ENCODE measurements at regions of chr10 and their contacts with region 1.

Region 1: GRCh38 chr10:125976960-125977603 is 80.7 kb downstream of the FANK1 start:
- DNase-seq: no peak
- ATAC-seq: no peak
- H3K4me3 ChIP-seq: no peak overlapping the region
- H3K27ac ChIP-seq: no peak overlapping the region
- H3K4me1 ChIP-seq: no peaks in the 10 kb centered on the region
- H3K27me3 ChIP-seq: no peaks in the 10 kb centered on the region

Region 2: GRCh38 chr10:125868372-125868975 is 108.6 kb before region 1 on chr10:
- intact Hi-C with region 1: loop called in 1 of 4 experiments (anchors 5 kb)
- DNase-seq: no peak
- ATAC-seq: no peak
- H3K4me3 ChIP-seq: no peak overlapping the region
- H3K27ac ChIP-seq: no peak overlapping the region
- H3K4me1 ChIP-seq: no peaks in the 10 kb centered on the region
- H3K27me3 ChIP-seq: no peaks in the 10 kb centered on the region

Region 3: GRCh38 chr10:126090911-126091728 is 114.0 kb after region 1 on chr10:
- intact Hi-C with region 1: no loop called
- DNase-seq: no peak
- ATAC-seq: peak in 1 of 2 donors; percentile 31
- H3K4me3 ChIP-seq: no peak overlapping the region
- H3K27ac ChIP-seq: no peak overlapping the region
- H3K4me1 ChIP-seq: no peaks in the 10 kb centered on the region
- H3K27me3 ChIP-seq: no peaks in the 10 kb centered on the region

Region 4: DNA sequence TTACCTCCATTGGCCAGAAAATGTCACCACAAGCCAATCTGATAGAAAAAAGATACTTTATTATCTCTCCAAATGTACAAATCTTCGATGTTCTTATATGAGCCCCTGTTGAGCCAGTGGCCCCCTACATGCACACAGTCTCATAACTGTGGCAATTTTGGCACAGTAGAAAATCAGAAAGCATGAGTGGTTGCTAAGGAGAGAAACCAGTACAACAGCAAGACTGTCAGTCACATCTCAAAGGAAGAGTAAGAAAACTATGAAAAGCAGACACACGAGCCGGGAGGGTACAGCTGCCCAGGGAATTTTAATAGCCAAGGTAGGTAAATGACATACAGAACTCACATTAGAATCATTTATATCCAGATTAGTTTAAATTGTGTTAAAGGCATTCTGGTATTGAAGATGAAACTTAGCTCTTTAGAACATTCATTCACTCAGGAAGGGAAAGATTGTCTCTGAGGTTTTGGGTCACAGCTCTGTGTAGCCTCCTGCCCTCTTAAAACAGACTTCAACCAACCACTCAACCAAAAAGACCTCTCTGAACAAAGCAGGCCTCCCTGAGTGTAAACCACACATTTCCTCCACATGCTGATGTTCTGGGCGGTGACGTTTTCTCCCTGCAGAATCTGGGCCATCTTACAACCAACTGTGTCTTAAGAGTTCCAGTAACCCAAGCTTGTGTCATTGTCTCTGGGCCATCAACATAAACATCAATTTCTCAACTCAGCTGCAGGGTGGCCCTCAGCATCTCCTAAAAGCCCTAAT is 492.0 kb after region 1 on chr10:
- intact Hi-C with region 1: no loop called
- DNase-seq: no peak
- ATAC-seq: no peak
- H3K4me3 ChIP-seq: no peak overlapping the region
- H3K27ac ChIP-seq: no peak overlapping the region
- H3K4me1 ChIP-seq: no peaks in the 10 kb centered on the region
- H3K27me3 ChIP-seq: no peaks in the 10 kb centered on the region

Region 5: DNA sequence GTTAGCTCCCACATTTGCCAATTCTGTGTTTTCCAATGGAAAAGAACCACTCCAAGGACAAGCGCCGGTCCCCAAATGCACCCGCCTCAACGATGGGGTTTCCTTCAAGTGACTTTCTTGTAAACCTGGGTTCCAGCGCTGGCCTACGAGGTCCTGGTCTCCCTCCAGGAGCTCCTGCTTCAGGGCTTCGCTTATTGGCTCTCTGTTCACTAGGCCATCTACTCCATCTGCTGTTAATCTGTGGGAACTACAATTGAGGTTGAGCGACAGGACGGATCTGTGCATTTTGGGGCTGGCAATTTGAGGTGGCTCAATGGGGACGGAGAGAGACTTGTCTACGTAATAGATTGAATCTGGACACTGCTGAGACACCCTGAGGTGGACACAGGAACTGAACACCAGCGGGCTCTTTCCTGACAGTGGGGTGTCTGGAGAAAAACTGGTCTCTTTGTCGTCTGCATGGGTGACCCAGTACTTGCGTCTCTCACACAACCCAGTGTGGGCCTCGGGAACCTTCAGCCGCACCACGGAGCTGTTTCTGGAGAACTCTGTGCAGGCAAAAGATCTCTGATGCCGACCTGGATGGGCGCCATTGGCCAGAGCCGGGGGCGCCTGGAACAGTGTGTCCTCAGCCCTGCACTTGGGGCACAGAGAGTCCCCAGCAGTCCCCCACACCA is 527.1 kb after region 1 on chr10:
- intact Hi-C with region 1: loop called in 3 of 4 experiments (anchors 2 to 10 kb)
- DNase-seq: peak; percentile 30 to 50 (median 46)
- ATAC-seq: peak; percentile 69 to 79
- H3K4me3 ChIP-seq: no peak overlapping the region
- H3K27ac ChIP-seq: no peak overlapping the region
- H3K4me1 ChIP-seq: no peaks in the 10 kb centered on the region
- H3K27me3 ChIP-seq: no peaks in the 10 kb centered on the region

Measured in right cardiac atrium (tissue), 5 donors.